Left colon (tissue), 2 donors: ENCODE measurements at regions of chr6 and their contacts with region 1.

Region 1: GRCh38 chr6:1596088-1596852 is 13.4 kb upstream of the FOXC1 start:
- DNase-seq: peak in 1 of 2 donors; percentile 59
- ATAC-seq: peak; percentile 79

Region 2: DNA sequence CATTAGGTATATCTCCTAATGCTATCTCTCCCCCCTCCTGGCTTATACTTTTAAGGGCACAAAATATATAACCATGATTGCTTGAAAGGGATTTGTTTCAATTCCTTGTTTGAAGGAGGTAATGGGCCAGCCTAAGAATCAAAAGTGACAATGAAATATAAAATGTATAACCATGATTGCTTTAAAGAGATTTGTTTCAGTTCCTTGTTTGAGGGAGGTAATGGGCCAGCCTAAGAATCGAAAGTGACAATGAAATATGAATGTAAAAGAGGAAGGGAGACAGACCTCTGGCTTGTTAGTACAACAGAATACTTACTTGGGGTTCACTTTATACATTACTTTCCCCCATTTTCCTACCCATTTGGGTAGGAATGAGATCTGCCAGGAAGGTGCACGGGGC is 68.9 kb after region 1 on chr6:
- intact Hi-C with region 1: no loop called
- DNase-seq: no peak
- ATAC-seq: no peak

Region 3: DNA sequence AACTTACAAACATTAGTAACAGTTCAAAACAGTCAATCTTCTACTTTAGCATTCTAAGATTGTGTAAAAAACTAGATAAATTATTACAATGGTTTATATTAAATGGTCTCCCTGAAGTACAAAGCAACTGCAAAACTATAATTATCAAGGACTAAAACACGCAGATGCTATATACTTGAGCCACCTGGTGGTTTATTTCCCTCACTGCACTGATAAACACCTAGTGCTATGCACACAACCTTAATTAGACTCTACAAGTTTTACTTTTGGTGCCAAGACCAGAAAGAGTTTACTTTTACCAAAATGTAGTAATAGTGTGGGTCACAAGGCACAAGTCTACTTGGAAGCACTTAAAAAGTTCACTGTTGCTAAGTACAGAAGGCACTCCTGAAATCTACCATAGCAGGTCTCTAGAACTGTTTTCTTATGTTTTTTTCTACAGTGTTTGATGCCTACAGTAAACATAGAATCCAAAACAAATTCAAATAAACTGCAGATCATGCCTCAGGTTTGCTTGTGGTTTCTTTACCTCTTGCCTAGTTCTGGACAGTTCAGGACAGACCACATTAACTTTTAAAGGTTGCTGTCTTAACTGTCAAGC is 599.9 kb after region 1 on chr6:
- intact Hi-C with region 1: loop called in 1 of 2 experiments (anchors 5 kb)
- DNase-seq: peak in 1 of 2 donors; percentile 26
- ATAC-seq: peak; percentile 86

Region 4: GRCh38 chr6:2450335-2450945 is 854.2 kb after region 1 on chr6:
- intact Hi-C with region 1: loop called in 1 of 2 experiments (anchors 10 kb)
- DNase-seq: peak; percentile 80 to 85
- ATAC-seq: peak; percentile 74

Region 5: GRCh38 chr6:2749969-2750600 is 1153.8 kb after region 1 on chr6:
- intact Hi-C with region 1: loop called in 1 of 2 experiments (anchors 10 kb)
- DNase-seq: peak in 1 of 2 donors; percentile 67
- ATAC-seq: peak; percentile 71